ENCODE measurements at regions of chr7 and their contacts with region 1.

Region 1: DNA sequence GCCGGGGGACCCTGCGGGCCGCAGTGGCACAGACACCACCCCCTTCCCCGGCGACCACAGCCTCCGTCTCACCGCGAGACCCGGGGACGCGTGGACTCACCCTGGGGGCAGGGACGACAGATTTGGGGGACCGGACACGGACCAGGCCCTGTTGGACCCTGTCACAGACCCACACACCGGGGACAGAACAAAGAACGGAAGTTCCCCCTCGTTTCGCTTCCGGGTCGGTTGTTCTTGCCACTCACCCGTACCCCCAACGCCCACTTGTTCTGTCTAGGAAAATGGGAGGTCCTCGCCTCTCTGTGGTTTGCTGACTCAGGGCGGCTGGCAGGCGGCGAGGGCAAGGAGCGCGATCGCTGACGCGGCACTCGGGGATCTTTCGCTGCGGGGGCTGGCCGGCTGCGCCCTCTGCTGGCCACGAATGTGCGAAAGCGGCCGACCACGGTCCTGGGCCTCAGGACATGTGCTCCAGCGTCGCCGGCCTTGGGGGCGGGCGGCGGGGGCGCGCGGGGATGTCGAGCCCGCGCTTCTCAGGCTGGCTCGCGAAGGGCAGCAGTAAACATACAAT is at the start of gene ZNF3:
- DNase-seq: peak; percentile 96
- ATAC-seq: peak; percentile 80
- H3K4me3 Mint-ChIP-seq: peak within 1 kb of the TSS; percentile 89
- H3K27ac Mint-ChIP-seq: peak within 1 kb of the TSS; percentile 91
- H3K4me1 Mint-ChIP-seq: peaks cover 34% of the 10 kb centered on the region
- H3K27me3 Mint-ChIP-seq: no peaks in the 10 kb centered on the region
- CTCF ChIP-seq: peak; percentile 58
- total RNA-seq, gene ZNF3: 33.9 and 39.6 TPM in 2 replicates

Region 2: DNA sequence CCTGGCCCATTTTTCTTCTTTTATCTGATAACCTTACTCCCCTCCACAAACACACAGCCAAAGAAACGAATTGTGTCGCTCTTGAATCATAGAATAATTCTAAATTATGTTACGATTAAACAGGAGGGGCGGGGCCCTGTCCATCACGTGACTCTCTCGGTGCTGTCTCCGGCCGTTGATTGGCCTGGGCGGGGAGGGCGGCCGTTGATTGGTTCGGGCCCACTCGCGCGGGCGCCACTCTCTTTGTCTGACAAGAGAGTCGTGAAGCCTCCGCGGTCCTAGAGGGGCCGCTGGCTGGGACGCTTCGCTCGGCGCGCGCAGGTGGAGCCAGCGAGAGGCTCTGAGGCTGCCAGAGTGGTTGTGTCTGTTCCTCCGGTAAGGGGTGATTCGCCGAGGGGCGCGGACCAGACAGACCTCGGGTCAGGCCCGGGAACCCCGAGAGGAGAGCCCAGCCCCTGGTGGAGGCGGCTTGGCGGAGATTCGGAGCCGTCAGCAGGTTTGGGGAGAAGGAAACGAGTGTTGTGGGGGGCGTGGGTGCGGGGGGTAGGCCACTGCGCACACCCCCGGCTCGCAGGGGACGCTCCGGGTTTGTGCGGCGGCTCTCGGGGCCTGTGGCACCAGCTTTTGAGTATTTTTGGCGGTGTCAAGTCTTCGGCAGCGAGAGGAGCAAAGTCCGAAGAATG is 608.9 kb before region 1 on chr7 and contains the start of gene ZNF789:
- CTCF ChIA-PET with region 1: no interaction called
- POLR2A ChIA-PET with region 1: no interaction called
- intact Hi-C with region 1: loop called (anchors 10 kb)
- DNase-seq: peak; percentile 90
- ATAC-seq: peak; percentile 97
- H3K4me3 Mint-ChIP-seq: peak within 1 kb of the TSS; percentile 98
- H3K27ac Mint-ChIP-seq: peak within 1 kb of the TSS; percentile 93
- H3K4me1 Mint-ChIP-seq: peaks cover 25% of the 10 kb centered on the region
- H3K27me3 Mint-ChIP-seq: no peaks in the 10 kb centered on the region
- CTCF ChIP-seq: no peak
- total RNA-seq, gene ZNF789: 24.5 and 38.3 TPM in 2 replicates

Region 3: GRCh38 chr7:99918959-99919813 is 162.4 kb before region 1 on chr7 and contains the start of gene TRIM4:
- CTCF ChIA-PET with region 1: interaction called, 3 read pairs
- POLR2A ChIA-PET with region 1: interaction called, 13 read pairs
- intact Hi-C with region 1: loop called (anchors 1 kb)
- DNase-seq: peak; percentile 80
- ATAC-seq: peak; percentile 97
- H3K4me3 Mint-ChIP-seq: peak within 1 kb of the TSS; percentile 94
- H3K27ac Mint-ChIP-seq: peak within 1 kb of the TSS; percentile 93
- H3K4me1 Mint-ChIP-seq: peaks cover 49% of the 10 kb centered on the region
- H3K27me3 Mint-ChIP-seq: no peaks in the 10 kb centered on the region
- CTCF ChIP-seq: no peak
- total RNA-seq, gene TRIM4: 33.1 and 35.8 TPM in 2 replicates

Region 4: DNA sequence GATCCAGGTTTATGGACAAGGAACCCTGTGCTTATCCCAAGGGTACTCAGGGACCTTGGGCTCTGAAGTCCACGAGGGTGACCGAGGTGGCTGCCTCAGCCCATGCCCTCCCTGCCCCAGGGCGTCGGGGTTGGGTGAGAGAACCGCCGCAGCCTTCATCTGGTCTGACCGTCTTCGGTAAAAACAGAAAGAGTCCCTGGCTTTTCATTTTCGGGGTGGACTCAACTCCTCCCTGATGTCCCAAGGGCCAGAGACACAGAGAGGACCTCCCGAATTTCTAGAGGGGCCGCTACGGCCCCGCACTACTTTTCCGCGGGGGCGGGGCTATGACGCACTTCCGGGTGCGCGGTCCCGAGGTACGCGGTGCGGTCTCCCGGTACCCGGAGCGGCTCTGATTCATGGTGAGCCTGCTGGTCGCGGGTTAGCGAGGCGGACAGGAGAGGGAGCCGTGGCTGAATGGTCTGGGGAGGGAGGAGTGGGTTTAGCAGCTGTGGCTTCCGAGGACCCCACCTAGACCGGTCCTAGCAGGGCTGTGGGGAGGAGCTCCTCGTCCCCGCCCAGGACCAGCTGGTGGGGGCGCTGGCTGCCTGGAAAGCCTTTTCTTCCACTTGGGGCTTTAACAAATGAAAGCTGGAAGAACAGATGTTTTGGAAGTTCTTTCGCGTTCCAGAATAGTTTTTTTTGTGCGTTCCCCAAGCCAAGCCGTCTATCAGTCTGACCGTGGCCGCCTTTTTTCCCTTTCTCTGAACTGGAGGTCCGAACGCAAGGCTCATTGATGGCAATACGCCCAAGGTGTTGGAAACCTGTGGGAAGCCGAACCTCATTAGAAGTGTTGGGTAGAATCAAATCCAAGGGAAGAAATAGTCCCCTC is 31.9 kb before region 1 on chr7 and contains the start of gene ZSCAN21:
- CTCF ChIA-PET with region 1: interaction called, 4 read pairs
- POLR2A ChIA-PET with region 1: interaction called, 7 read pairs
- intact Hi-C with region 1: loop called (anchors 1 kb)
- DNase-seq: peak; percentile 87
- ATAC-seq: peak; percentile 90
- H3K4me3 Mint-ChIP-seq: peak within 1 kb of the TSS; percentile 95
- H3K27ac Mint-ChIP-seq: peak within 1 kb of the TSS; percentile 94
- H3K4me1 Mint-ChIP-seq: peaks cover 16% of the 10 kb centered on the region
- H3K27me3 Mint-ChIP-seq: no peaks in the 10 kb centered on the region
- CTCF ChIP-seq: no peak
- total RNA-seq, gene ZSCAN21: 10.6 and 11.3 TPM in 2 replicates

Region 5: GRCh38 chr7:100126931-100127865 is 45.6 kb after region 1 on chr7 and contains the start of gene MBLAC1:
- CTCF ChIA-PET with region 1: interaction called, 5 read pairs
- POLR2A ChIA-PET with region 1: interaction called, 28 read pairs
- intact Hi-C with region 1: loop called (anchors 1 kb)
- DNase-seq: peak; percentile 81
- ATAC-seq: peak; percentile 85
- H3K4me3 Mint-ChIP-seq: peak within 1 kb of the TSS; percentile 100
- H3K27ac Mint-ChIP-seq: peak within 1 kb of the TSS; percentile 100
- H3K4me1 Mint-ChIP-seq: peaks cover 41% of the 10 kb centered on the region
- H3K27me3 Mint-ChIP-seq: no peaks in the 10 kb centered on the region
- CTCF ChIP-seq: no peak
- total RNA-seq, gene MBLAC1: 1.9 and 2.2 TPM in 2 replicates

Region 6: DNA sequence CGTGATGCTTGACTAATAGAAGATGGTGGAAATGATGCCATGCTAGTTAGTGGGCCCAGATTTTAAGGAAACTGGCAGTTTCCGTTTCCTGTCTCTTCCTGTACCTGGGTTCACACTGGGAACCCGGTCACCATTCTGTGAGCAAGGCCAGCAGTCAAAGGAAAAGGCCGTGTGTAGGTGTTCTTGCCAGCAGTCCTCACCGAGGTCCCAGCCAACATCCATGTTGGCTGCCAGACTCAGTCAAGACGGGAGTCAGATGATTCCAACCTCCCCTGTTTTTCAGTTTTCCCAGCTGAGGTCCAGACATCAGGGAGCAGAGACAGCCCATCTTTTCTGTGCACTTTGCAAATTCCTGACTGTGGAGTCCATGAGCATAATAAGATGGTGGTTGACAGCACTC is 261.1 kb after region 1 on chr7:
- CTCF ChIA-PET with region 1: no interaction called
- POLR2A ChIA-PET with region 1: interaction called, 4 read pairs
- intact Hi-C with region 1: loop called (anchors 2 kb)
- DNase-seq: no peak
- ATAC-seq: no peak
- H3K4me3 Mint-ChIP-seq: no peak overlapping the region
- H3K27ac Mint-ChIP-seq: peak overlapping the region; percentile 76
- H3K4me1 Mint-ChIP-seq: peaks cover 43% of the 10 kb centered on the region
- H3K27me3 Mint-ChIP-seq: no peaks in the 10 kb centered on the region
- CTCF ChIP-seq: no peak

Region 7: DNA sequence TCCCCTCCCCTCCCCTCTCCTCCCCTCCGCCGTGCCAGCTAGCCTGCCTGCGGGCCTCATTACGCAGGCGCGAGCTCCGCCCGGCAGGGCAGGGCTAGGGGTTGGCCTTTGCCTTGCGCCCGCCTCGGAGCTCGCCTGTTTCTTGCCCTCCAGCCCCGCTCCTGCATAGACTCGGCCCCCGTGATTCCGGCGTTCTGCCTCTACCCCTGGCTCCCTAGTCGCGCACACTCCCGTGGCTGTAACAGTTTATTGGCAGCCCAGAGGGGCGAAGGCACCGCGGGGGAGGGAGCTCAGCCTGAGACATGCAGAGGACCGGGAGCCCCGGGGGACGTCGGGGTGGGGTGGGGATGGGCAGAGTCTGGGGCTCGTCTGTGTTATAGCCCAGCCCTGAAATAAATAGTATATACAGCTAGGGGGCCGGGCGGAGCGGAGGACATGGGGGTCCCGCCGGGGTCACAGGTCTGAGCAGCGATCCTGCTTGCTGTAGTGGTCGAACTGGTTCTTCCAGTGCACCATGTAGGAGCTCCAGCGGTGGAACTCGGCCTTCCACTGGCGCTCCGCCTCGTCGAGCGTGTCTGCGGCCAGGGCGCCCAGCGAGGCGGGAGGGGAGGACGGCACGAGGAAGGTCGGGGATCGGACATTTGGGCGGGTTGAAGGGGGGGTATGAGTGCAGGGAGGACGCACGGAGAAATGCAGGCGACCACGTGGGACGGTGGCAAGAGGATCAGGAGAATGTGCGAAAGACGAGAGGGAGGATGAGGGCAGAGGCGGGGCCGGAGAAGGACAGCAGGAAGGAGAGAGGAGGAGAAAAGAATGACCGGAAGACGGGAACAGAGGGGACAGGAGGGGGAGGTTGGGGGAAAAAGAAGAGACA is 808.4 kb after region 1 on chr7:
- CTCF ChIA-PET with region 1: no interaction called
- POLR2A ChIA-PET with region 1: interaction called, 3 read pairs
- intact Hi-C with region 1: loop called (anchors 5 kb)
- DNase-seq: peak; percentile 89
- ATAC-seq: peak; percentile 85
- H3K4me3 Mint-ChIP-seq: peak overlapping the region; percentile 87
- H3K27ac Mint-ChIP-seq: peak overlapping the region; percentile 76
- H3K4me1 Mint-ChIP-seq: peaks cover 50% of the 10 kb centered on the region
- H3K27me3 Mint-ChIP-seq: peaks cover 23% of the 10 kb centered on the region
- CTCF ChIP-seq: no peak

Measured in activated B cell treated with CpG ODN at 0.5 μM for 24 hours (primary cell).